Activated CD8-positive, alpha-beta T cell treated with anti-CD3 and anti-CD28 coated beads, Interleukin-2, amount 10 ng/mL, durations not matched to agents 7 days and 5 days (primary cell): ENCODE measurements at regions of chr2 and their contacts with region 1.

Region 1: GRCh38 chr2:233114421-233114861 is 54.3 kb downstream of the INPP5D start:
- DNase-seq: peak; percentile 65
- ATAC-seq: peak; percentile 87
- H3K4me3 Mint-ChIP-seq: peak overlapping the region; percentile 15
- H3K27ac Mint-ChIP-seq: peak overlapping the region; percentile 30
- H3K4me1 Mint-ChIP-seq: peaks cover 58% of the 10 kb centered on the region
- H3K27me3 Mint-ChIP-seq: no peaks in the 10 kb centered on the region

Region 2: GRCh38 chr2:233100192-233100998 is 14.0 kb before region 1 on chr2:
- CTCF ChIA-PET with region 1: interaction called, 10 read pairs
- POLR2A ChIA-PET with region 1: no interaction called
- DNase-seq: peak; percentile 71
- ATAC-seq: peak; percentile 85
- H3K4me3 Mint-ChIP-seq: peak overlapping the region; percentile 52
- H3K27ac Mint-ChIP-seq: peak overlapping the region; percentile 78
- H3K4me1 Mint-ChIP-seq: peaks cover 70% of the 10 kb centered on the region
- H3K27me3 Mint-ChIP-seq: no peaks in the 10 kb centered on the region